Gastrocnemius medialis (tissue), 4 donors: ENCODE measurements at regions of chr16 and their contacts with region 1.

Region 1: GRCh38 chr16:68100488-68100887 is 15.3 kb downstream of the NFATC3 start:
- DNase-seq: no peak
- ATAC-seq: no peak
- H3K4me3 ChIP-seq: no peak overlapping the region
- H3K27ac ChIP-seq: peak overlapping the region in 3 of 4 donors; percentile 3 to 35 (median 23)
- H3K4me1 ChIP-seq: peaks cover 57 to 70% of the 10 kb centered on the region in 2 donors
- H3K27me3 ChIP-seq: no peaks in the 10 kb centered on the region
- CTCF ChIP-seq: peak in 1 of 5 experiments; percentile 16
- POLR2A ChIP-seq: no peak

Region 2: DNA sequence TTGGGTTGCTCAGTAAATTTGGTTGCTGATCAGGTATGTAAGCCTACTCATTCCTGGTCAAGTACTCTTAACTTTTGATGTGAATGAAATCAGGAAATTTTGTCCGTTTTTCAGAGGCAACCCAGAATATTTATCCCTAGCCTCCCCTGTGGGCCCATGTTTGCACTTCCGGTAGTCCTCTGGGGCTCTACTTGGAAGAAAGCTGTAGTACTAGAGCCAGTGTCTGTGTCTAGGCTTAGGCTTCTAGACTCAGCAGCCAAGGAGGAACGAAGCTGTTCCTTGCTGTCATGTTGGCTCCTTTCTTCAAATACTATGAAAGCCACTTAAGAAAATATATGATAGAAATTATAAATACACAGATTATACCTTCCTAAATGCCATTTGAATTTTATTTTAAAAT is 114.2 kb after region 1 on chr16:
- in situ Hi-C with region 1: loop called in 1 of 4 experiments (anchors 10 kb)
- intact Hi-C with region 1: no loop called
- DNase-seq: no peak
- ATAC-seq: peak in 1 of 2 donors; percentile 63
- H3K4me3 ChIP-seq: no peak overlapping the region
- H3K27ac ChIP-seq: peak overlapping the region; percentile 3 to 49 (median 29)
- H3K4me1 ChIP-seq: peaks cover 1 to 12% of the 10 kb centered on the region in 2 donors
- H3K27me3 ChIP-seq: no peaks in the 10 kb centered on the region
- CTCF ChIP-seq: no peak
- POLR2A ChIP-seq: no peak